SK-N-SH (cell line): ENCODE measurements at regions of chr12 and their contacts with region 1.

Region 1: DNA sequence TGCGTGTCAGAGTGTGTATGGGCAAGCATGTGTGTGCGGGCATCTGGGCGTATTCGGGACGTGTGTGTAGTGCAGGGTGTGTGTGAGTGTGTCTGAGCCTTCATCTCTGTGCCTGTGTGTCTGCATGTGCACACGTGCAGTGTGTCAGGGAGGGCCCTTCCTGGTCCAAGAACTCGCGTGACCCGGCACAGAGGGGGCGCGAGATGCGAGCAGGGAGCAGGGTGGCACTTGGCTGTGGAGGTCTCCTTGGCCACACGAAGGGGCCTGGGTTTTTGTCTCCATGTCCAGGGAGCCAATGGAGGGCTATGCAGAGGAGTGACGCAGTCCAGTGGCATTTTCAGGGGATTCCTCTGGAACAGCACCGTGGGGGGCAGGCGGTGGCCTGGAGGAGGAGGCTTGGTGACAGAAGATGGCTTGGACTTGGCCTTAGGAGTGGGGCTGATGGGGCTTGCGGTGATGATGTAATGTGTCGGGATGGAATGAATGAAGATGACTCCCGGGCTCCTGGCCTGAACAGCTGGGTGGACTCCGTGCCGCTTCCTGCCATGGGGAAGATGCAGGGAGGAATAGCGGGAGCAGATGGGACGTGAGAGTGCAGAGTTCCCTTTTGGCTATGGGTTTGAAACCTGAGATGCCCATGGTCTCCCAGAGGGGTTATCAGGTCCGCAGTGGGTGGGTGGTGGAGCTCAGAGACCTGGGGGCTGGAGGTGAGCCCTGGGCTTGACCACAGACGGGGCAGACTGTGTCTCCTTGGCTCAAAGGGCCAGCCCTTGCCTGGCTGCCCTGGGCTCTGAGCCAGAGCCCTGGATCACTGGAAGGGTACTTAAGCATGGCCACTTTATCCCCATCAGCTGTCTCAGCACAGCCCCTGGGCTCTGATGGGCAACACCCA is 208.3 kb downstream of the PHETA1 start:
- DNase-seq: peak; percentile 55
- H3K4me3 ChIP-seq: no peak overlapping the region
- H3K27ac ChIP-seq: peak overlapping the region in 1 of 2 experiments; percentile 4; a peak in 1 of 4 replicates
- H3K4me1 ChIP-seq: peaks cover 0 to 21% of the 10 kb centered on the region in 2 experiments; a peak in 2 of 4 replicates
- H3K27me3 ChIP-seq: no peaks in the 10 kb centered on the region
- CTCF ChIP-seq: no peak
- EP300 ChIP-seq: no peak
- RAD21 ChIP-seq: no peak

Region 2: DNA sequence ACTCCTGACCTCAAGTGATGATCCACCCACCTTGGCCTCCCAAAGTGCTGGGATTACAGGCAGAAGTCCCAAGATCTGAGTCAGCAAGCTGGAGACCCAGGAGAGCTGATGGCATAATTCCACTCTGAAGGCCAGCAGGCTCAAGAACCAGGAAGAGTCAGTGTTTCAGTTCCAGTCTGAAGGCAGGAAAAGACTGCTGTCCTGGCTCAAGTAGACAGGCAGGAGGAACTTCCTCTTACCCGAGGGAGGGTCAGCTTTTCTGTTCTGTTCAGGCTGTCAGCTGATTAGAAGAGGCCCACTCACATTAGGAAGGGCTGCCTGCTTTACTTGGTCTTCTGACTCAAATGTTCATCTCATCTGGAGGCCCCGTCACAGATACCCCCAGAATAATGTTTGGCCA is 34.3 kb before region 1 on chr12:
- CTCF ChIA-PET with region 1: no interaction called
- POLR2A ChIA-PET with region 1: no interaction called
- DNase-seq: no peak
- H3K4me3 ChIP-seq: no peak overlapping the region
- H3K27ac ChIP-seq: no peak overlapping the region
- H3K4me1 ChIP-seq: peaks cover 0 to 16% of the 10 kb centered on the region in 2 experiments; a peak in 2 of 4 replicates
- H3K27me3 ChIP-seq: no peaks in the 10 kb centered on the region
- CTCF ChIP-seq: no peak
- EP300 ChIP-seq: no peak
- RAD21 ChIP-seq: no peak

Region 3: GRCh38 chr12:111174251-111174960 is 13.8 kb after region 1 on chr12:
- CTCF ChIA-PET with region 1: interaction called, 11 read pairs
- POLR2A ChIA-PET with region 1: no interaction called
- DNase-seq: no peak
- H3K4me3 ChIP-seq: no peak overlapping the region
- H3K27ac ChIP-seq: peak overlapping the region in 1 of 2 experiments; percentile 47; a peak in 2 of 4 replicates
- H3K4me1 ChIP-seq: peaks cover 0 to 58% of the 10 kb centered on the region in 2 experiments; a peak in 2 of 4 replicates
- H3K27me3 ChIP-seq: no peaks in the 10 kb centered on the region
- CTCF ChIP-seq: no peak
- EP300 ChIP-seq: no peak
- RAD21 ChIP-seq: peak; percentile 64

Region 4: GRCh38 chr12:111222523-111222922 is 61.9 kb after region 1 on chr12:
- CTCF ChIA-PET with region 1: no interaction called
- POLR2A ChIA-PET with region 1: no interaction called
- DNase-seq: no peak
- H3K4me3 ChIP-seq: no peak overlapping the region
- H3K27ac ChIP-seq: peak overlapping the region in 1 of 2 experiments; percentile 82; a peak in 2 of 4 replicates
- H3K4me1 ChIP-seq: peaks cover 0 to 38% of the 10 kb centered on the region in 2 experiments; a peak in 2 of 4 replicates
- H3K27me3 ChIP-seq: no peaks in the 10 kb centered on the region
- CTCF ChIP-seq: no peak
- EP300 ChIP-seq: no peak
- RAD21 ChIP-seq: no peak

Region 5: GRCh38 chr12:111584959-111585358 is 424.4 kb after region 1 on chr12:
- CTCF ChIA-PET with region 1: no interaction called
- POLR2A ChIA-PET with region 1: no interaction called
- DNase-seq: no peak
- H3K4me3 ChIP-seq: no peak overlapping the region
- H3K27ac ChIP-seq: no peak overlapping the region
- H3K4me1 ChIP-seq: no peaks in the 10 kb centered on the region
- H3K27me3 ChIP-seq: no peaks in the 10 kb centered on the region
- CTCF ChIP-seq: no peak
- EP300 ChIP-seq: no peak
- RAD21 ChIP-seq: no peak